ENCODE measurements at regions of chr3 and their contacts with region 1.

Region 1: DNA sequence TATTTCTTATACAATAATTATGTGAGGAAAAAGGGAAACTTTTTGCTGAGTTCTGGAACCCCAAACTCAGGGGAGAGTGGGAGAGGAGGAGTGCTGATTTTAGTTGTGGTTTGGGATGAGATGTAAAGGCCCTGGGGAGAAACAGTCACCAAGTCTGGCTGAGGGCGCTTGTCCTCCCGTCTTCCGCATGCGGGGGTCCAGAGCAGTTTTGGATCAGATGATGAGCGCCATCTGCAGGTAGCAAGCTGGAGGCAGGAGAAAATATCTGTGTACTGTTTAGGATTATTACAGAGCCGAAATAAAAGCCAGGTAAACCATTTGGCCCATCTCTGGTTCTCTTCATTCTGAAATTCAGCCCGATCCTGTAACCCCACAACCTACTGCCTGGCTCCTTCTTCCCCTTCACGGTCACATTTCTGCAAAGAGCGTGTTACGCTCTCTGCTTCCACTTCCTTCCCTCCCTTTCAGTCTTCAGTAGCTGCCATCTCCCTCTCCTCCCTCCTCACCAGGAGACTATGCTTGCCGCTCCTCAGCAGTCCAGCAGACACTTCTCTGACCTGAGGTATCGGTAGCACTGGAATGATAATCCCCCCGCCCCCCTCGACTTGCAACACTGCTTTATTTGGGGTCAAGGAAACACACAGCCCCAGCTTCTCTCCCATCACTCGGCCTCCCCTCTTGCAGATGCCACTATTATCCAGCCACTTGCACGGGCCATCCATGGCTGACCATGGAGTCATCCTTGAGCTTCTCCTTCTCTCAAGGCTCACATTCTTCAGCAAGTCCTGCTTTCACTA is 1.4 kb upstream of the PARP14 start:
- DNase-seq: peak; percentile 49 to 84 (median 79)
- ATAC-seq: peak; percentile 82
- H3K4me3 ChIP-seq: peak overlapping the region; percentile 87
- H3K4me3 Mint-ChIP-seq: peak overlapping the region; percentile 87 to 99 (median 94)
- H3K27ac ChIP-seq: peak overlapping the region; percentile 98
- H3K27ac Mint-ChIP-seq: peak overlapping the region; percentile 93 to 100 (median 98)
- H3K4me1 ChIP-seq: peaks cover 27 to 33% of the 10 kb centered on the region in 2 donors
- H3K4me1 Mint-ChIP-seq: peaks cover 40 to 57% (median 54%) of the 10 kb centered on the region in 7 donors
- H3K27me3 ChIP-seq: no peaks in the 10 kb centered on the region
- H3K27me3 Mint-ChIP-seq: no peaks in the 10 kb centered on the region

Region 2: DNA sequence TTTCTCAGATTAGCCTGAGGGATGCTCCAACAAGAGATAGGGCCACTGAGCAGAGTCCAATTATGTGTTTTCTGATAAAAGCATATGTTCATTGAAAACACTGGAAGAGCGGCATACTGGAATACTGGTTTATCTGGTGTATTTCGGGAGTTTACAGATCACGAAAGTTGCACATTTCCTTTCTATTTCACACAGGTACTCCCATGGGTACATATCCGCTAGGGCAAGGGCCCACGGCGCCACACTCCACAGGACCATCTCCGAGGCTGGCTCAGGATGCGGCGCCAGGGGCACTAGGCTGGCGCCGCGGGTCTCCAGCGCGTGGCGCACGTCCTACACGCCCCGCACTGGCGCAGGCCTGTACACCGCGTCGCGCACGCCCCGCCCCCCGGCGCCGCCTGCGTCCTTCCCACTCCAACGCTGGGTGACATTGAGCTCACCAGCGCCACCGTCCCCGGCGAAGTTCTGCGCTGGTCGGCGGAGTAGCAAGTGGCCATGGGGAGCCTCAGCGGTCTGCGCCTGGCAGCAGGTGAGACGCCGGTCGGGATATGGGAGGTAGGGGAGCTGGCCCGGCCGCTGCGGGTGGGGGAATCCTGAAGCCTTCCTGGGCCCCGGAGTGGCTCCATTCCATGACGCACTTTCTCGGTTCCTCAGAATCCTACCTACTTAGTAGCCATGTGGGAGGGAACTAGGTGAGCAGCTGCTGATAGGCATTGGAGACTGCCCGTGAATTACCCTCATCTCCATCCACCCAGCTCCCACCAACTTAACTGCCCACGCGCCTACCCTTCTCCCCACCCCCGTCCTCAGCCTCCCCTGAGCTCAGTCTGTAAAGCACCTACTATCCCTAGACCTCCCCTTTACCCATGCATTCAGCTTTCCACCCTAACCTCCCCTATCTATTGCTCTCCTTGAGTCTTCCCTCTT is 295.2 kb before region 1 on chr3 and contains the start of gene FAM162A:
- CTCF ChIA-PET with region 1: interaction called, 7 read pairs
- POLR2A ChIA-PET with region 1: interaction called, 7 read pairs
- intact Hi-C with region 1: loop called (anchors 2 kb)
- DNase-seq: peak; percentile 90 to 94 (median 92)
- ATAC-seq: peak; percentile 98
- H3K4me3 ChIP-seq: peak within 1 kb of the TSS; percentile 84
- H3K4me3 Mint-ChIP-seq: peak within 1 kb of the TSS; percentile 87 to 99 (median 95)
- H3K27ac ChIP-seq: peak within 1 kb of the TSS; percentile 85
- H3K27ac Mint-ChIP-seq: peak within 1 kb of the TSS; percentile 88 to 98 (median 95)
- H3K4me1 ChIP-seq: peaks cover 12 to 15% of the 10 kb centered on the region in 2 donors
- H3K4me1 Mint-ChIP-seq: peaks cover 18 to 69% (median 55%) of the 10 kb centered on the region in 7 donors
- H3K27me3 ChIP-seq: no peaks in the 10 kb centered on the region
- H3K27me3 Mint-ChIP-seq: no peaks in the 10 kb centered on the region
- total RNA-seq, gene FAM162A: 17.6 to 73.2 (median 35.5) TPM

Region 3: DNA sequence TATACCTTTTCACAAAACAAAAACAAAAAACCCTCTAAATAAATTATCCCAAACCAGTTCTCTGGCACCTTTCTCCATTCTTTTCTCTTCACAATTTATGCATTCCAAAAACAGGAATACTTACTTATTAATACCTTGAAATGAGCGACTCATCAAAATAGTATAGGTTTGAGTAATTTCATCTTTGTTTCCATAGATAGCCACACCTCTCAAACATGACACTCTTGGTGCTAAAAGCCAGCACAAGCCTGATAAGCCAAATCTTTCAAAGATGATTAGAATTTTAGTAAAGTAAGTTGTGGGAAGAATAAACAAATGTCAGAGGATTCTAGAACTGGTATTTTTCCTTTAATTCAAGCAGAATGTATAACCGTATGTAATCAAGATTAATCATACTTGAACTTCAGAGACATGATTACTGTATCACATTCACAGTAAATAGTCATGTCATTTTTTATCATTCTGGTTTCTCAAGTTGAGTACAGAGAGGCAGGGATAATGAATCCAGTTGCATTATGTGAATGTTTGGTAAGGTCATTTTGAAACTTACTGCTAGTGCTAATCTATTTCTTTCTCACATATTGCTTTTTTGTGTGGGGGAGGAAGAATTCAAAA is 251.3 kb before region 1 on chr3:
- CTCF ChIA-PET with region 1: no interaction called
- POLR2A ChIA-PET with region 1: no interaction called
- intact Hi-C with region 1: no loop called
- DNase-seq: no peak
- ATAC-seq: no peak
- H3K4me3 ChIP-seq: no peak overlapping the region
- H3K4me3 Mint-ChIP-seq: no peak overlapping the region
- H3K27ac ChIP-seq: no peak overlapping the region
- H3K27ac Mint-ChIP-seq: peak overlapping the region in 3 of 9 donors; percentile 9 to 34 (median 9)
- H3K4me1 ChIP-seq: no peaks in the 10 kb centered on the region
- H3K4me1 Mint-ChIP-seq: peaks cover 0 to 7% (median 0%) of the 10 kb centered on the region in 7 donors
- H3K27me3 ChIP-seq: no peaks in the 10 kb centered on the region
- H3K27me3 Mint-ChIP-seq: no peaks in the 10 kb centered on the region

Region 4: DNA sequence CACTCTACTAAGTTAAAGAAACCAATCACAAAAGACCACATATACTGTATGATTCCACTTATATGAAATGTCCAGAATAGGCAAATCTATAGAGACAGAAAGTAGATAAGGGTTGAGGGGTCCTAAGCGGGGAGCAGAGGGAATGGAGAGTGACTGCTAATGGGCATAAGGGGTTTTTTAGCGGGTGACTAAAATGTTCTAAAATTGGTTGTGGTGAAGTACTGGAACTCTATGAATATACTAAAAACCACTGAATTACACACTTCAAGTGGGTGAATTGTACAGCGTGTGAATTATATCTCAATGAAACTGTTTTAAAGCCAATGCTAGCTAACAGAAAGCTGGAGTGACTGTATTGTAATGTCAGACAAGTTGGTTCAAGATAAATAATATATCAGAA is 197.9 kb before region 1 on chr3:
- CTCF ChIA-PET with region 1: no interaction called
- POLR2A ChIA-PET with region 1: no interaction called
- intact Hi-C with region 1: no loop called
- DNase-seq: no peak
- ATAC-seq: no peak
- H3K4me3 ChIP-seq: no peak overlapping the region
- H3K4me3 Mint-ChIP-seq: no peak overlapping the region
- H3K27ac ChIP-seq: no peak overlapping the region
- H3K27ac Mint-ChIP-seq: no peak overlapping the region
- H3K4me1 ChIP-seq: peaks cover 0 to 6% of the 10 kb centered on the region in 2 donors
- H3K4me1 Mint-ChIP-seq: peaks cover 14 to 65% (median 55%) of the 10 kb centered on the region in 7 donors
- H3K27me3 ChIP-seq: no peaks in the 10 kb centered on the region
- H3K27me3 Mint-ChIP-seq: no peaks in the 10 kb centered on the region

Region 5: GRCh38 chr3:122514123-122515019 is 164.9 kb before region 1 on chr3 and contains the start of gene KPNA1:
- CTCF ChIA-PET with region 1: interaction called, 4 read pairs
- POLR2A ChIA-PET with region 1: interaction called, 3 read pairs
- intact Hi-C with region 1: loop called (anchors 1 kb)
- DNase-seq: peak; percentile 81 to 92 (median 90)
- ATAC-seq: peak; percentile 92
- H3K4me3 ChIP-seq: peak within 1 kb of the TSS; percentile 80
- H3K4me3 Mint-ChIP-seq: peak within 1 kb of the TSS; percentile 77 to 100 (median 92)
- H3K27ac ChIP-seq: peak within 1 kb of the TSS; percentile 100
- H3K27ac Mint-ChIP-seq: peak within 1 kb of the TSS; percentile 78 to 97 (median 91)
- H3K4me1 ChIP-seq: peaks cover 6 to 21% of the 10 kb centered on the region in 2 donors
- H3K4me1 Mint-ChIP-seq: peaks cover 35 to 52% (median 46%) of the 10 kb centered on the region in 7 donors
- H3K27me3 ChIP-seq: no peaks in the 10 kb centered on the region
- H3K27me3 Mint-ChIP-seq: no peaks in the 10 kb centered on the region
- total RNA-seq, gene KPNA1: 50.6 to 70.2 (median 54.3) TPM

Region 6: GRCh38 chr3:122609798-122610559 is 69.3 kb before region 1 on chr3:
- CTCF ChIA-PET with region 1: no interaction called
- POLR2A ChIA-PET with region 1: no interaction called
- intact Hi-C with region 1: loop called in 1 of 2 experiments (anchors 1 kb)
- DNase-seq: peak in 1 of 9 donors; percentile 30
- ATAC-seq: peak; percentile 73
- H3K4me3 ChIP-seq: no peak overlapping the region
- H3K4me3 Mint-ChIP-seq: peak overlapping the region in 2 of 10 donors; percentile 72 to 74
- H3K27ac ChIP-seq: no peak overlapping the region
- H3K27ac Mint-ChIP-seq: peak overlapping the region in 7 of 9 donors; percentile 39 to 96 (median 89)
- H3K4me1 ChIP-seq: no peaks in the 10 kb centered on the region
- H3K4me1 Mint-ChIP-seq: peaks cover 5 to 33% (median 8%) of the 10 kb centered on the region in 7 donors
- H3K27me3 ChIP-seq: no peaks in the 10 kb centered on the region
- H3K27me3 Mint-ChIP-seq: no peaks in the 10 kb centered on the region

Region 7: GRCh38 chr3:122793568-122794416 is 114.5 kb after region 1 on chr3 and contains the start of gene HSPBAP1:
- CTCF ChIA-PET with region 1: no interaction called
- POLR2A ChIA-PET with region 1: interaction called, 8 read pairs
- intact Hi-C with region 1: loop called (anchors 1 to 2 kb)
- DNase-seq: peak; percentile 71 to 90 (median 86)
- ATAC-seq: peak; percentile 77
- H3K4me3 ChIP-seq: peak within 1 kb of the TSS; percentile 83
- H3K4me3 Mint-ChIP-seq: peak within 1 kb of the TSS in 5 of 10 donors; percentile 91 to 97 (median 95)
- H3K27ac ChIP-seq: peak within 1 kb of the TSS; percentile 82
- H3K27ac Mint-ChIP-seq: peak within 1 kb of the TSS in 6 of 9 donors; percentile 79 to 99 (median 96)
- H3K4me1 ChIP-seq: peaks cover 22 to 34% of the 10 kb centered on the region in 2 donors
- H3K4me1 Mint-ChIP-seq: peaks cover 20 to 29% (median 27%) of the 10 kb centered on the region in 7 donors
- H3K27me3 ChIP-seq: no peaks in the 10 kb centered on the region
- H3K27me3 Mint-ChIP-seq: no peaks in the 10 kb centered on the region
- total RNA-seq, gene HSPBAP1: 9.0 to 31.5 (median 23.3) TPM